PC-9 (cell line): ENCODE measurements at regions of chr6 and their contacts with region 1.

Region 1: DNA sequence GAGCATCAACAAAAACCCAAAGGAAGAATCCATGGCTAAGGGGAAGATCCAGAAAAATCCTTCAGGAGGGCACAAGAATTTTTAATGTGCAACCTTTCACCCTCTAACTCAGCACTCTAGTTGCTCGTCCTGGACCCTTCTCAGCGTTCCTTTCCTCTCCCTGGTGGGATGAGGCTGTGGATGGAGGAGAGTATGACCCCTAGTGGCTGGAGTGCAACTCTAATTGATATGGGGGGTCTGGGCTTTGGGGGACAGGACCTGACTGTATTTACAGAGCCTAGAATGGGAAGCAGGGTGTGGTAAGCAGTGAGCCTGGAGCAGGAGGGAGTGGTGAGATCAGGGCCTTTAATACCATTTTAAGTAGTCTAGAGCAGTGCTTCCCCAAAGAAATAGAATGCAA is 83.9 kb upstream of the CEP85L start:
- DNase-seq: no peak
- H3K4me3 ChIP-seq: no peak overlapping the region
- H3K27ac ChIP-seq: no peak overlapping the region
- H3K4me1 ChIP-seq: peaks cover 5% of the 10 kb centered on the region
- H3K27me3 ChIP-seq: no peaks in the 10 kb centered on the region
- CTCF ChIP-seq: no peak; the same call in 1 of the 2 replicates

Region 2: GRCh38 chr6:118565311-118565960 is 169.9 kb before region 1 on chr6:
- CTCF ChIA-PET with region 1: no interaction called
- POLR2A ChIA-PET with region 1: no interaction called
- intact Hi-C with region 1: no loop called
- DNase-seq: peak; percentile 3 to 72
- H3K4me3 ChIP-seq: no peak overlapping the region
- H3K27ac ChIP-seq: no peak overlapping the region
- H3K4me1 ChIP-seq: no peaks in the 10 kb centered on the region
- H3K27me3 ChIP-seq: no peaks in the 10 kb centered on the region
- CTCF ChIP-seq: peak; percentile 82

Region 3: GRCh38 chr6:118717106-118717505 is 18.2 kb before region 1 on chr6:
- CTCF ChIA-PET with region 1: interaction called, 10 read pairs
- POLR2A ChIA-PET with region 1: no interaction called
- intact Hi-C with region 1: no loop called
- DNase-seq: no peak
- H3K4me3 ChIP-seq: no peak overlapping the region
- H3K27ac ChIP-seq: no peak overlapping the region
- H3K4me1 ChIP-seq: no peaks in the 10 kb centered on the region
- H3K27me3 ChIP-seq: no peaks in the 10 kb centered on the region
- CTCF ChIP-seq: no peak